Aorta (tissue), 5 donors: ENCODE measurements at regions of chr12 and their contacts with region 1.

Region 1: GRCh38 chr12:79203058-79203457 is 338.5 kb downstream of the SYT1 start:
- DNase-seq: no peak
- ATAC-seq: no peak
- H3K4me3 ChIP-seq: no peak overlapping the region
- H3K27ac ChIP-seq: no peak overlapping the region
- H3K4me1 ChIP-seq: no peaks in the 10 kb centered on the region
- H3K27me3 ChIP-seq: peaks cover 0 to 1% of the 10 kb centered on the region in 2 donors

Region 2: GRCh38 chr12:79233341-79233781 is 30.3 kb after region 1 on chr12:
- intact Hi-C with region 1: loop called in 1 of 2 experiments (anchors 2 kb)
- DNase-seq: no peak
- ATAC-seq: no peak
- H3K4me3 ChIP-seq: no peak overlapping the region
- H3K27ac ChIP-seq: no peak overlapping the region
- H3K4me1 ChIP-seq: no peaks in the 10 kb centered on the region
- H3K27me3 ChIP-seq: no peaks in the 10 kb centered on the region

Region 3: GRCh38 chr12:79252358-79253075 is 49.5 kb after region 1 on chr12:
- intact Hi-C with region 1: no loop called
- DNase-seq: no peak
- ATAC-seq: no peak
- H3K4me3 ChIP-seq: no peak overlapping the region
- H3K27ac ChIP-seq: no peak overlapping the region
- H3K4me1 ChIP-seq: no peaks in the 10 kb centered on the region
- H3K27me3 ChIP-seq: no peaks in the 10 kb centered on the region